Activated CD4-positive, alpha-beta memory T cell treated with anti-CD3 and anti-CD28 coated beads for 36 hours (primary cell): ENCODE measurements at regions of chr4 and their contacts with region 1.

Region 1: GRCh38 chr4:53196882-53197771 is 168.7 kb downstream of the SCFD2 start:
- DNase-seq: no peak
- H3K4me3 Mint-ChIP-seq: no peak overlapping the region
- H3K27ac Mint-ChIP-seq: no peak overlapping the region
- H3K4me1 Mint-ChIP-seq: peaks cover 2% of the 10 kb centered on the region
- H3K27me3 Mint-ChIP-seq: no peaks in the 10 kb centered on the region

Region 2: GRCh38 chr4:53015681-53016080 is 181.4 kb before region 1 on chr4:
- CTCF ChIA-PET with region 1: no interaction called
- POLR2A ChIA-PET with region 1: no interaction called
- intact Hi-C with region 1: loop called (anchors 2 kb)
- DNase-seq: peak; percentile 21
- H3K4me3 Mint-ChIP-seq: no peak overlapping the region
- H3K27ac Mint-ChIP-seq: no peak overlapping the region
- H3K4me1 Mint-ChIP-seq: peaks cover 22% of the 10 kb centered on the region
- H3K27me3 Mint-ChIP-seq: no peaks in the 10 kb centered on the region

Region 3: DNA sequence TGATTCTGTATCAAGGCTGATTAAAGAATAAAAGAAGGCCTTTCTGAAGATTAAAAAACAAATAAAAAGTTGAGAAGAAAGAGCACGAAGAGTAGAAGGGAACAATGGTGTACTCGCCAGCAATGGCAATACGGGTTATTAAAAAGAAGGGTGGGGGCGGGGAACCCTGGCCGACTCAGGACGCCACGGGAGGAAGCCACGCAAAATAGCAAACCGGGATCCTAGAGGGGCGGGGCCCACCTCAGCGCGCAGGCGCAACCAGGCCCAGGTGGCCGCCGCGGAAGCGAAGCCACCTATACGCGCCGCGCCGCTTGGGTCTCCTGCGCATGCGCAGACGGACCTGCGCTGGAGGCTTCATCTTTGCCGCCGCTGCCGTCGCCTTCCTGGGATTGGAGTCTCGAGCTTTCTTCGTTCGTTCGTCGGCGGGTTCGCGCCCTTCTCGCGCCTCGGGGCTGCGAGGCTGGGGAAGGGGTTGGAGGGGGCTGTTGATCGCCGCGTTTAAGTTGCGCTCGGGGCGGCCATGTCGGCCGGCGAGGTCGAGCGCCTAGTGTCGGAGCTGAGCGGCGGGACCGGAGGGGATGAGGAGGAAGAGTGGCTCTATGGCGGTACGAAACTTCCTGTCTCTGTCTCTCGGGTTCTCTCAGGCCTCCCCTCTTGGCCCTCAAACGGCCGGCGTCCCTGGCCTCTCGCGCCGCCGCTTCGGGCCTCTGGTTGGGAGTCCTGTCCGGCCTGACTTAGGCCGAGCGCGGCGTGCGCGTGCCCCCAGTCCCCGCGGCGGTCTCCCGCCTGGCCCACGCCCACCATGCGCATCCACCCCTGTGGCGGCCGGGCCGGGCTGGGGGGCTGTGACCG is 180.4 kb after region 1 on chr4 and contains the start of gene FIP1L1:
- CTCF ChIA-PET with region 1: interaction called, 3 read pairs
- POLR2A ChIA-PET with region 1: no interaction called
- intact Hi-C with region 1: loop called (anchors 5 kb)
- DNase-seq: peak; percentile 97
- H3K4me3 Mint-ChIP-seq: peak within 1 kb of the TSS; percentile 99
- H3K27ac Mint-ChIP-seq: peak within 1 kb of the TSS; percentile 98
- H3K4me1 Mint-ChIP-seq: peaks cover 32% of the 10 kb centered on the region
- H3K27me3 Mint-ChIP-seq: peaks cover 7% of the 10 kb centered on the region
- total RNA-seq, gene FIP1L1: 65.0 to 72.7 TPM

Region 4: GRCh38 chr4:53804719-53805118 is 607.6 kb after region 1 on chr4:
- CTCF ChIA-PET with region 1: no interaction called
- POLR2A ChIA-PET with region 1: no interaction called
- intact Hi-C with region 1: loop called (anchors 5 kb)
- DNase-seq: peak; percentile 29
- H3K4me3 Mint-ChIP-seq: no peak overlapping the region
- H3K27ac Mint-ChIP-seq: no peak overlapping the region
- H3K4me1 Mint-ChIP-seq: no peaks in the 10 kb centered on the region
- H3K27me3 Mint-ChIP-seq: peaks cover 2% of the 10 kb centered on the region

Region 5: GRCh38 chr4:53908661-53909078 is 711.5 kb after region 1 on chr4:
- CTCF ChIA-PET with region 1: no interaction called
- POLR2A ChIA-PET with region 1: no interaction called
- intact Hi-C with region 1: loop called (anchors 10 kb)
- DNase-seq: no peak
- H3K4me3 Mint-ChIP-seq: no peak overlapping the region
- H3K27ac Mint-ChIP-seq: no peak overlapping the region
- H3K4me1 Mint-ChIP-seq: peaks cover 12% of the 10 kb centered on the region
- H3K27me3 Mint-ChIP-seq: peaks cover 47% of the 10 kb centered on the region

Region 6: GRCh38 chr4:54217642-54218495 is 1020.7 kb after region 1 on chr4:
- CTCF ChIA-PET with region 1: interaction called, 3 read pairs
- POLR2A ChIA-PET with region 1: no interaction called
- intact Hi-C with region 1: loop called (anchors 5 kb)
- DNase-seq: peak; percentile 59
- H3K4me3 Mint-ChIP-seq: no peak overlapping the region
- H3K27ac Mint-ChIP-seq: no peak overlapping the region
- H3K4me1 Mint-ChIP-seq: peaks cover 6% of the 10 kb centered on the region
- H3K27me3 Mint-ChIP-seq: peaks cover 31% of the 10 kb centered on the region